Esophagus squamous epithelium (tissue), 5 donors: ENCODE measurements at regions of chr11 and their contacts with region 1.

Region 1: DNA sequence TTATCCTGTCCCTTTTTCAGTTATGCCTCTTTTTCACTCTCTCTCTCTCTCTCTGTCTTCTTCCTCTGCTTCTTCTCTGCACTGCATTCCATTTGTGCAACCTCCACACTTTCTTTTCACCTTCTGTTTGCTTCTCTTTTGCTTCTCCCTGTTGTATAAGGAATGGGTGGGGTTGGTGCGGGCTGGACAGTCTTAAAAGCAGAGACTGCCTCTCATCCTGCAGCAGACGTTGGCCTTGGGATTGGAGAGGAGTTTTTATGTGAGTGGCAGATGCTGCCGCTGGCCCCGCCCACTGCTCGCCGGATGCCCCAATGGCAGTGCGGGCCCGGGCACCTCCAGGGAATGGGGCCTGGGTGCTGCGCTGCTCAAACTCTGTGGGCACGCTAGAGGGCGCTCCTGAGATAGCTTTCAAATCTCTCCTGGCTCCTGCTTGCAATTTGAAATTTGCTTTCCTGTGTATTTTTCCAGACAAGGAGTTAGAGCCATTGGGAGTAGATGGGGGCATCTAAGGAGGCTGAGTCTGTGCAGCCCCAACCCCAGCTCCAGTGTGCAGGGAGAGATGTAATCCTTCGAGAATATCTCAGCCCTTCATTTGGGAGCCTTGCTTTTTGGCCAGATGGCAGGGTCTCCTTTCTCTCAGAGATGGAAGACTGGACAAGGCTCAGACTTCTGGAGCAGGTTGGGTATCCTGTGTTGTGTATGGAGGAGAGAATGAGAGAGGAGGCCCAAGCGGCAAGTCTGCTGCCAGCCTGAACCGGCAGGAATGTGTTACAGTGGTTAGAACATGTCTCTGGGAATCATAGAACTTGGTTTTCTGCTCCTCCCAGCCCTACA is 81.2 kb downstream of the GRAMD1B start:
- DNase-seq: no peak
- H3K4me3 ChIP-seq: no peak overlapping the region
- H3K27ac ChIP-seq: no peak overlapping the region
- H3K4me1 ChIP-seq: no peaks in the 10 kb centered on the region
- H3K27me3 ChIP-seq: peaks cover 0 to 6% (median 0%) of the 10 kb centered on the region in 4 donors
- CTCF ChIP-seq: peak in 5 of 6 experiments; percentile 78 to 93 (median 83)
- POLR2A ChIP-seq: no peak

Region 2: DNA sequence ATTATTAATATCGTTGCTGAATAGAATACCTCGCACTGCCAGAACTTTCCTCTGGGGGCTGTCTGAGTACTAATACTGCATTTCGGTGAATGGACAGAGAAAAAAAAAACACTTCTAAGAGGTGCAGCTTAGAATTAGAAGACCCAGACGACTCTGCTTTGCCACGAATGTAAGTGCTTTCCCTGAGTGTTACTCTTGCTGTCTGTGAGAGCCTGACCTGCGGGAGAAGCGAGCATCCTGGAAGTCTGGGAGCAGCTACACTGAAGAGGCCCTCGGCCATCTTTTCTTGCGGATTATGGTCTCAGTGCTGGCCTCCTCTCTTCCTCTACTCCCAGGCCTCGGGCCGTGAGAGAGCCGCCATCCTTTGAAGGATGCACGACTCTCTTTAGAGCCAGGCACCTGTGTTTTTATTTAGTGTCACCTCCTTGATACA is 48.3 kb after region 1 on chr11:
- intact Hi-C with region 1: loop called (anchors 5 kb)
- DNase-seq: no peak
- H3K4me3 ChIP-seq: peak overlapping the region; percentile 28 to 55 (median 39)
- H3K27ac ChIP-seq: peak overlapping the region in 1 of 4 donors; percentile 33
- H3K4me1 ChIP-seq: peaks cover 6 to 33% (median 11%) of the 10 kb centered on the region in 3 donors
- H3K27me3 ChIP-seq: peaks cover 0 to 4% (median 0%) of the 10 kb centered on the region in 4 donors
- CTCF ChIP-seq: no peak
- POLR2A ChIP-seq: no peak